Aorta (tissue), 5 donors: ENCODE measurements at regions of chr11 and their contacts with region 1.

Region 1: GRCh38 chr11:9314291-9315036 is at the start of gene TMEM41B:
- DNase-seq: peak; percentile 99 to 100
- ATAC-seq: peak; percentile 100
- H3K4me3 ChIP-seq: peak within 1 kb of the TSS; percentile 81 to 94
- H3K27ac ChIP-seq: peak within 1 kb of the TSS in 1 of 2 donors; percentile 72
- H3K4me1 ChIP-seq: no peaks in the 10 kb centered on the region
- H3K27me3 ChIP-seq: no peaks in the 10 kb centered on the region
- total RNA-seq, gene TMEM41B: 28.8 to 31.4 TPM

Region 2: GRCh38 chr11:9280655-9281301 is 33.7 kb before region 1 on chr11:
- intact Hi-C with region 1: loop called in 1 of 2 experiments (anchors 5 kb)
- DNase-seq: no peak
- ATAC-seq: no peak
- H3K4me3 ChIP-seq: no peak overlapping the region
- H3K27ac ChIP-seq: no peak overlapping the region
- H3K4me1 ChIP-seq: no peaks in the 10 kb centered on the region
- H3K27me3 ChIP-seq: no peaks in the 10 kb centered on the region

Region 3: DNA sequence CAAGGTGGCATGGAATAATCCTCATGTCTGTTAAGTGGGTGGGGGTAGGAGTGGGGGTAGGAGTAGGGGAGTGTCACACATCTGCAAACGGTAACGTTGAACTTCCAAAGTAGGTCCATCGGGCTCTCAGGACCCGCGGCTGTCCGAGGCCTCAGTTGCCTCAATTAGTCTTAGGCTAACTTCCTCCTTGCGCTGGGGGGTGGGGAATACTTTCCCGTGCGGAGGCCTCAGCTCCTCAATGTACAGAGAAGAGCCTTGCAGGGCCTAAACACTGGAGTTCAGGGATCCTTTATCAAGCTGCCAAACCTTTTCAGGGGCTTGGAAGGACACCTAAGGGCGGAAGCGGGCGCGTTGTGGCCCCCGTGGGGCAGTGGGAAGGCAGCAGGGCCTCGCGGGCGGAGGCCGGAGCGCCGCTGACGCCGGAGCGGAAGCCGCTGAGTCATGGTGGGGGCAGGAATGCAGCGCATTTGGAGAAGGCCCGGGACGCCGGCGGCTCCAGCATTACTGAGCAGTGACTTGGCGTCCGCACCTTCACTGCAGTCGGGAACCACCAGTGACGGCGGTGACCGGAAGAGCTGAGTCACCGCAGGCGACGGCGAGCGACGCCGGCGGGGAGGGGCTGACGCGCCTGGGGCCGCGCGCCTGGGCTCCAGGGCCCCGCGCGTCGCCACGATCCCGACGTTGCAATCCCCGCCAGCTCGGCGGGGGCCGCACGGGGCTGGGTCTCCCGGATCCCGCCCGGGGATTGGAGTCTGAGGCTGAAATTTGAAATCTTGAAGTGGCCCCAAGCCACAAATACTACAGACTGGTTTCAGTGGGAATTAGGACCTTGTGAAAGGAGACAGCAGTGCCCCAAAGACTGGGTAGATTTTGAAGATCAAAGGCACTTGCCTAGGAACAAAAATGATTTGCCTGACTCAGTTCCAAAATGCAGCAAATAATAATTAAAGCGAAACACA is 49.8 kb after region 1 on chr11:
- intact Hi-C with region 1: loop called (anchors 5 kb)
- DNase-seq: peak; percentile 99
- ATAC-seq: peak; percentile 99
- H3K4me3 ChIP-seq: no peak overlapping the region
- H3K27ac ChIP-seq: peak overlapping the region; percentile 91 to 94
- H3K4me1 ChIP-seq: peaks cover 0 to 3% of the 10 kb centered on the region in 2 donors
- H3K27me3 ChIP-seq: no peaks in the 10 kb centered on the region